Panc1 (cell line): ENCODE measurements at regions of chr18 and their contacts with region 1.

Region 1: GRCh38 chr18:77970814-77971213 is 721.2 kb downstream of the GALR1 start:
- DNase-seq: no peak
- ATAC-seq: no peak
- H3K4me3 ChIP-seq: no peak overlapping the region
- H3K27ac ChIP-seq: no peak overlapping the region
- H3K4me1 ChIP-seq: no peaks in the 10 kb centered on the region
- H3K27me3 ChIP-seq: peaks cover 17% of the 10 kb centered on the region
- CTCF ChIP-seq: no peak

Region 2: GRCh38 chr18:78679613-78680260 is 708.9 kb after region 1 on chr18:
- CTCF ChIA-PET with region 1: interaction called, 14 read pairs
- POLR2A ChIA-PET with region 1: no interaction called
- in situ Hi-C with region 1: no loop called
- intact Hi-C with region 1: no loop called
- DNase-seq: no peak
- ATAC-seq: no peak
- H3K4me3 ChIP-seq: no peak overlapping the region
- H3K27ac ChIP-seq: no peak overlapping the region
- H3K4me1 ChIP-seq: no peaks in the 10 kb centered on the region
- H3K27me3 ChIP-seq: peaks cover 8% of the 10 kb centered on the region
- CTCF ChIP-seq: no peak